Heart left ventricle (tissue), 16 donors: ENCODE measurements at regions of chr6 and their contacts with region 1.

Region 1: GRCh38 chr6:28182255-28182654 is 40.6 kb downstream of the ZKSCAN8 start:
- DNase-seq: no peak
- ATAC-seq: no peak
- H3K4me3 ChIP-seq: no peak overlapping the region
- H3K27ac ChIP-seq: no peak overlapping the region
- H3K4me1 ChIP-seq: no peaks in the 10 kb centered on the region
- H3K27me3 ChIP-seq: peaks cover 0 to 16% (median 0%) of the 10 kb centered on the region in 9 donors
- CTCF ChIP-seq: no peak
- POLR2A ChIP-seq: no peak

Region 2: GRCh38 chr6:27809939-27810767 is 372.1 kb before region 1 on chr6:
- intact Hi-C with region 1: loop called in 1 of 10 experiments (anchors 5 kb)
- DNase-seq: peak; percentile 58 to 78 (median 73)
- ATAC-seq: peak; percentile 72 to 87 (median 82)
- H3K4me3 ChIP-seq: peak overlapping the region; percentile 32 to 77 (median 64)
- H3K27ac ChIP-seq: peak overlapping the region; percentile 25 to 96 (median 76)
- H3K4me1 ChIP-seq: peaks cover 0 to 63% (median 10%) of the 10 kb centered on the region in 12 donors
- H3K27me3 ChIP-seq: peaks cover 0 to 81% (median 8%) of the 10 kb centered on the region in 9 donors
- CTCF ChIP-seq: no peak
- POLR2A ChIP-seq: peak; percentile 69 to 98

Region 3: GRCh38 chr6:28136585-28137504 is 45.4 kb before region 1 on chr6:
- intact Hi-C with region 1: no loop called
- DNase-seq: peak; percentile 91 to 95 (median 94)
- ATAC-seq: peak; percentile 76 to 94 (median 92)
- H3K4me3 ChIP-seq: peak overlapping the region; percentile 53 to 97 (median 86)
- H3K27ac ChIP-seq: peak overlapping the region; percentile 90 to 98 (median 96)
- H3K4me1 ChIP-seq: peaks cover 0 to 54% (median 23%) of the 10 kb centered on the region in 12 donors
- H3K27me3 ChIP-seq: no peaks in the 10 kb centered on the region
- CTCF ChIP-seq: peak in 1 of 12 donors; percentile 2
- POLR2A ChIP-seq: peak in 1 of 2 donors; percentile 25